Mammary epithelial cell (primary cell): ENCODE measurements at regions of chr2 and their contacts with region 1.

Region 1: DNA sequence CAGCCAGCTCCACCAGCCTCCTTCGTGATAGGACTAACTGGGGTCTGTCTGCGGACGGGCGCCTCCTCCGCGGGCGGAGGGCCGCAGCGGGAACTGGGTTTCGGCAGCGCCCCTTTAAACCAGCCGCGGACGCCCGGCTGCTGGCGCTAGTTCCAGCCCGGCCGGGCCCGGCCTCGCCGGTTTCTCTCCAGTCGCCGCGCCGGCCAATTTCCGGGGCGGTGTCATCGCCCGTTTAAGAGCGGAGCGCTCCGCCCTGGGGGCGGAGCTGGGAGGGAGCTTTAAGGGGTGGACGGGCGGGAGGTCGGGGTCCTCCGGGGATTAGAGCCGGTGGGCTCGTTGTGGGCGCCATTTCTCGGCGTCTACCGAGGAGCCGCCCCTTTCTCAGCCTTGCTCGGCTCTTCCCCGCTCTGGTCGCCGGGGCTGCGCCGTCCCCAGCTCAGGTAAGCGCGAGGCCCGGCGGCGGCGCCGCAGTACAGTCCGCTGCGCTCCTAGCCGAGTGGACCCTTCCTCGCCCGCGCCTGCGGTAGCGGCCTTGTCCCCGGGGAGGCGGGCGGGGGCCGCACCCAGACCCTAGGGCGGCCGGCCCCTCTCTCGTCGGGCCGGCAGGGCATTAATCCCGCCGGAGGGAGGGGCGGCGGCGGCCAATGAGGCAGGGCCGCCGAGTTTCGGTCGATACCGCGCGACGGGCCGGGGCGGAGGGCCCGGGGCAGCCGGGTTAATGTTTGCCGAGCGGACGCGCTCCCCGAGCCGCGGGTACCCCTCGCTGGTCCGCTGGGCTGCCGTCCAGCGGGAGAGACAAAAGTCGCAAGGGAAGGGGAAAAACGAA is at the start of gene EPB41L5:
- DNase-seq: peak; percentile 94
- H3K4me3 ChIP-seq: peak within 1 kb of the TSS; percentile 67 to 96 (median 68)
- H3K27ac ChIP-seq: peak within 1 kb of the TSS; percentile 80
- H3K4me1 ChIP-seq: peaks cover 10% of the 10 kb centered on the region
- H3K27me3 ChIP-seq: no peaks in the 10 kb centered on the region
- CTCF ChIP-seq: peak in 1 of 2 donors; percentile 6
- total RNA-seq, gene EPB41L5: 16.5 to 18.8 TPM

Region 2: GRCh38 chr2:119759451-119760236 is 253.3 kb before region 1 on chr2 and contains the start of gene PTPN4:
- CTCF ChIA-PET with region 1: no interaction called
- dilution Hi-C with region 1: no loop called
- in situ Hi-C with region 1: no loop called
- intact Hi-C with region 1: loop called (anchors 10 kb)
- DNase-seq: peak; percentile 99
- H3K4me3 ChIP-seq: peak within 1 kb of the TSS; percentile 63 to 85 (median 83)
- H3K27ac ChIP-seq: peak within 1 kb of the TSS; percentile 77
- H3K4me1 ChIP-seq: peaks cover 17% of the 10 kb centered on the region
- H3K27me3 ChIP-seq: no peaks in the 10 kb centered on the region
- CTCF ChIP-seq: no peak
- total RNA-seq, gene PTPN4: 36.9 to 48.7 TPM